A549 (cell line): ENCODE measurements at regions of chr6 and their contacts with region 1.

Region 1: DNA sequence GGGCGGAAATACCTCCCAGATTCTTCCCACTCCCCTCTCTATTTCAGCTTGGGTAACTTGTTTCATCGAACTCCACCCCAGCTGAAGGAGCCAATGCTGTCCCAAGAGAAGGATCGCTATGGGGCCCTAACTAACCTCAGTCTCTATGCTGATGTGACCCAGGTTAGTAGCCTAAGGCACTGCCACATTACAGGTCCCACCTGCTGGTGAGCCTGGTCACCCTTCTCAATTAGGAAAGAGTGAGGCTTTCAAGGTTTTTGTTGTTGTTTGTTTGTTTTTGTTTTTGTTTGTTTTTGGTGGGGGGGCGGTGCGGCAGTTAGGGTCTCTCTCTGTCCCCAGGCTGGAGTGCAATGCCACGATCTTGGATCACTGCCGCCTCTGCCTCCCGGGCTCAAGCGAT is 168.4 kb downstream of the OR2B2 start:
- DNase-seq: no peak
- ATAC-seq: no peak
- H3K4me3 ChIP-seq: no peak overlapping the region
- H3K27ac ChIP-seq: no peak overlapping the region
- H3K4me1 ChIP-seq: no peaks in the 10 kb centered on the region
- CTCF ChIP-seq: no peak
- EP300 ChIP-seq: no peak
- POLR2A ChIP-seq: no peak
- RAD21 ChIP-seq: no peak

Region 2: GRCh38 chr6:27720607-27721580 is 22.9 kb before region 1 on chr6:
- CTCF ChIA-PET with region 1: no interaction called
- POLR2A ChIA-PET with region 1: interaction called, 11 read pairs
- DNase-seq: peak; percentile 69 to 89
- ATAC-seq: peak; percentile 96 to 97
- H3K4me3 ChIP-seq: peak overlapping the region; percentile 49
- H3K27ac ChIP-seq: peak overlapping the region; percentile 68 to 69
- H3K4me1 ChIP-seq: peaks cover 5% of the 10 kb centered on the region; the same call in 1 of the 3 replicates
- CTCF ChIP-seq: 0 out of 3 replicates have a peak, but pooled peaks have one; percentile 12
- EP300 ChIP-seq: no peak
- POLR2A ChIP-seq: no peak
- RAD21 ChIP-seq: no peak

Region 3: DNA sequence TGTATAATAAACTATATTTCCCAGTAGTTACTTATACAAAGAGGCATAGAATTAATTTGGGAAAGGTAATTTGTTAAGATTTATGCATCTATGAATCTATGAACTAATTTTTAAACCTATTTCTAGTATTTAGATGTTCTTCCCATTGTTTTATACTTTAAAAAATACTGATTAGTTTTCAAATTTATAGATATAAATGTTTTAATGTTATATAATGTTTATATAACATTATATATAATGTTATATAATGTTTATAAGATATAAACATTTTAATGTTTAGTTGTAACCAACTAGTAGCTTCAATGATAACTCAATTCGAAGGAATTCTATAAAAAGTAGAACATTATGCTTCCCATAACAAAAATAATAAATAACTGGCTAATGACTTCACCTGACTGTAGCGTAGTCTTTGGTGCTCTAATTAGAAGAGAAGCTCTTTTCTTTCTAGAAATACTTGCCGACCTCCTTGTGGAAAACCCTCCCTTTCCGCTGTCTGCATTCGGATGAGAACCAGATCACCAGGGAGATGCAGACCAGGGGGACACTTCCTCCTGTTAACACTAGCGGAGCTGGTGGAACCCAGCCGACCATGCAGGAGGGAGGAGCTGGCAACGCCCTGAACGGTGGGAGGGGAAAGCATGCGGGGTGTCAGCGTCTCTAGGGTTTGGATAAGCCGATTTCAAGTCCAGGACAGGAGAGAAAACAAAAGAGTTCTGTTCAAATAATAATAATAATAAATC is 10.0 kb after region 1 on chr6:
- CTCF ChIA-PET with region 1: interaction called, 17 read pairs
- POLR2A ChIA-PET with region 1: interaction called, 8 read pairs
- DNase-seq: peak; percentile 70 to 91
- ATAC-seq: peak; percentile 89 to 92
- H3K4me3 ChIP-seq: peak overlapping the region; percentile 64
- H3K27ac ChIP-seq: peak overlapping the region; percentile 33 to 40; a peak in 2 of 6 replicates
- H3K4me1 ChIP-seq: peaks cover 5% of the 10 kb centered on the region; the same call in 1 of the 3 replicates
- CTCF ChIP-seq: no peak
- EP300 ChIP-seq: no peak
- POLR2A ChIP-seq: no peak
- RAD21 ChIP-seq: no peak

Region 4: GRCh38 chr6:27864906-27865849 is 121.4 kb after region 1 on chr6:
- CTCF ChIA-PET with region 1: no interaction called
- POLR2A ChIA-PET with region 1: no interaction called
- DNase-seq: peak; percentile 78 to 87
- ATAC-seq: peak; percentile 72 to 80
- H3K4me3 ChIP-seq: peak overlapping the region; percentile 52
- H3K27ac ChIP-seq: peak overlapping the region; percentile 74 to 81
- H3K4me1 ChIP-seq: 0 out of 3 replicates have a peak, but pooled peaks cover 4% of the 10 kb centered on the region
- CTCF ChIP-seq: no peak
- EP300 ChIP-seq: no peak
- POLR2A ChIP-seq: peak; percentile 32; the same call in 1 of the 2 replicates
- RAD21 ChIP-seq: no peak